Ascending aorta (tissue), 2 donors: ENCODE measurements at regions of chr12 and their contacts with region 1.

Region 1: GRCh38 chr12:46209914-46210872 is 58.6 kb downstream of the SLC38A1 start:
- DNase-seq: no peak
- H3K4me3 ChIP-seq: no peak overlapping the region
- H3K27ac ChIP-seq: peak overlapping the region; percentile 24 to 58
- H3K4me1 ChIP-seq: peaks cover 0 to 11% of the 10 kb centered on the region in 2 donors
- H3K27me3 ChIP-seq: no peaks in the 10 kb centered on the region
- CTCF ChIP-seq: no peak

Region 2: DNA sequence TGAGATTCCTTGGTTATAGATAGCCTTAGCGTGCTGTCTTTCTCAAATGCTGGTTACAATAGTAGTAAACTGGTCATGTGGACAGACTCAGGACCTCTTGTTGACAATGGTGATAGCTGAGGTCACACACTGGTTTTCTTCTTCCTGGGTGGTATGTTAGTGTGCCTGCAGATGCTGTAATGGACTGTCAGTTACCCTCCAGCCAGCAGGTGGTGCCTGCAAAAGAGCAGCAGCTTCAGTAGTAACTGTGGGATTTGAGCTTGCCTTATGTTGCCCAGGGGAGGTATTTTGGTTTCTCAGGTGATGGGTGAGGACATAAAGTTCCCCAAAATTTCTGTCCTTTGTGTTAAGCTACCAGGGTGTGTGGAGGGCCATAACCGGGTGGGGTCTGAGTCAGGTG is 186.1 kb before region 1 on chr12:
- intact Hi-C with region 1: no loop called
- DNase-seq: no peak
- H3K4me3 ChIP-seq: no peak overlapping the region
- H3K27ac ChIP-seq: no peak overlapping the region
- H3K4me1 ChIP-seq: no peaks in the 10 kb centered on the region
- H3K27me3 ChIP-seq: no peaks in the 10 kb centered on the region
- CTCF ChIP-seq: no peak

Region 3: DNA sequence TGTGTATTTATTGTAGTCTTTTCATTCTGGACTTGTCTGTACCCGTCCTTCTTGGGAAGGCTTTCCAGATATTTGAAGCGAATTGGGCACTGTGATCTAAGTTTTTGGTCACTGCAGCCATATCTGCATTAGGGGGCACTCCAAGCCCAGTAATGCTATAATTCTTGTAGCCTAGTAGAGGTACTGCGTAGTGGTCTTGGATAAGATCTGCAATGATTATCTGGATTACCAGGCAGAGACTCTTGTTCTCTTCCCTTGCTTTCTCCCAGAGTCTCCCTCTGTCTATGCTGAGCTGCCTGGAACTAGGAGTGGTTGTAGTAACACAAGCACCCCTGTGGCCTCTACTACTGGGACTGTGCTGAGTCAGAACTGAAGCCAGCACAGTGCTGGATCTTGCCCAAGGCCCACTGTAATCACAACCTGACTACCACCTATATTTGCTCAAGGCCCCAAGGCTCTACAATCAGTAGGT is 132.4 kb after region 1 on chr12:
- intact Hi-C with region 1: no loop called
- DNase-seq: peak in 1 of 2 donors; percentile 64
- H3K4me3 ChIP-seq: no peak overlapping the region
- H3K27ac ChIP-seq: peak overlapping the region; percentile 32 to 51
- H3K4me1 ChIP-seq: peaks cover 5% of the 10 kb centered on the region in 2 donors
- H3K27me3 ChIP-seq: no peaks in the 10 kb centered on the region
- CTCF ChIP-seq: peak; percentile 34 to 65 (median 59)

Region 4: DNA sequence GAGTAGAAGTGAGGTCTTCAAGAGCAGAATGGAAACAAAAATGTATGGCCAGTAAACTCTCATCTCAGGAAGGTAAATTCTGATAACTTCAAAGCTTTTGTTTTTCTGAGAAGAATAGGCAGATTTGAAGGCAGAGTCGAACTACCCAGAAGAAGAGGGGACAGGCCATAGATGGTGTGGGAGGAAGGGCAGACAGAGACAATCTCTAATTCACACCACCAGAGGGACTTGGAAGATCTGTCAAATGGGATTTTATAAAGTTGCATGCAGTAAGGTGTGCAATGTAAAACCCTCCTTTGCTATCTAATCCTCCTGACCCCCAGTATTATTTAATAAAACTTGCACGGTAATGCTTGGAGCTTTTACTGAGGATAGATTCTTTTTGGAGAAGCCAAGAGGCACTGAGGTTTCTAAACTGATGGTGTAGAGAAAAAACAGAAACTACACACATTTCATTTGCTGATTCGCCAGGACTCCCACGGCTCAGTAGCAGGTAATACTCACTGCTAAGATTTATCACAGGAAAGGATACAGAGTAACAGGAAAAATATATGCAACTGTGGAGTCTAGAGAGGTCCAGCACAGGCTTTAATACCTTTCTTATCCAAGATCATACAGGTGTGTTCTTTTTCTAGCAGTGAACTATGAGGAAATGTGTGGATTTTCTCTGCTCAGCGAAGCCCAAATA is 144.1 kb after region 1 on chr12:
- intact Hi-C with region 1: loop called (anchors 5 kb)
- DNase-seq: no peak
- H3K4me3 ChIP-seq: no peak overlapping the region
- H3K27ac ChIP-seq: peak overlapping the region; percentile 63 to 72
- H3K4me1 ChIP-seq: peaks cover 0 to 11% of the 10 kb centered on the region in 2 donors
- H3K27me3 ChIP-seq: no peaks in the 10 kb centered on the region
- CTCF ChIP-seq: no peak

Region 5: GRCh38 chr12:46382964-46383653 is 172.9 kb after region 1 on chr12:
- intact Hi-C with region 1: no loop called
- DNase-seq: peak; percentile 79 to 98
- H3K4me3 ChIP-seq: peak overlapping the region; percentile 89 to 95
- H3K27ac ChIP-seq: peak overlapping the region; percentile 95 to 100
- H3K4me1 ChIP-seq: peaks cover 14 to 35% of the 10 kb centered on the region in 2 donors
- H3K27me3 ChIP-seq: no peaks in the 10 kb centered on the region
- CTCF ChIP-seq: peak in 1 of 3 experiments; percentile 16